Activated naive CD4-positive, alpha-beta T cell treated with anti-CD3 and anti-CD28 coated beads, Interleukin-2, amount 10 ng/mL, durations not matched to agents 7 days and 5 days (primary cell): ENCODE measurements at regions of chr2 and their contacts with region 1.

Region 1: DNA sequence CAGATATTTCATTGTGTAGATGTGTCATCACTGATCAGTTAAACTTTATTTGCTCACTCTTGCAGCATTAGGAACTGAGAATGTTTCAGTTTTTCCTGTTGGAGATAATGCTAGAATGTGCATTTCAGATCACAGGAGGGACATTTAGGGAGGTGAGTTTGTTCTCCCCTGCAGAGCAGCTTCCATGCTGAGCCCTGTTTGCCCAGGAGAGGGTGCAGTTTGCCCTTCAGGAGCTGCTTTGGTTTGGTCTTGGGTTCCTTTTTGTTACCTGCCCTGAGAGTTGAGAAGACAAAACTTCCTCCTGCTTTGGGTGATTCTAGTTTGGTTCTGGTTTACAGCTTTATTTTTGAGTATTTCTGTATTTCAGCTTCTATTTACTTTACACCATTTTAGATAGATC is 49.9 kb downstream of the DGKD start:
- DNase-seq: peak; percentile 85
- H3K4me3 Mint-ChIP-seq: no peak overlapping the region
- H3K27ac Mint-ChIP-seq: peak overlapping the region; percentile 46
- H3K4me1 Mint-ChIP-seq: peaks cover 72% of the 10 kb centered on the region
- H3K27me3 Mint-ChIP-seq: no peaks in the 10 kb centered on the region

Region 2: DNA sequence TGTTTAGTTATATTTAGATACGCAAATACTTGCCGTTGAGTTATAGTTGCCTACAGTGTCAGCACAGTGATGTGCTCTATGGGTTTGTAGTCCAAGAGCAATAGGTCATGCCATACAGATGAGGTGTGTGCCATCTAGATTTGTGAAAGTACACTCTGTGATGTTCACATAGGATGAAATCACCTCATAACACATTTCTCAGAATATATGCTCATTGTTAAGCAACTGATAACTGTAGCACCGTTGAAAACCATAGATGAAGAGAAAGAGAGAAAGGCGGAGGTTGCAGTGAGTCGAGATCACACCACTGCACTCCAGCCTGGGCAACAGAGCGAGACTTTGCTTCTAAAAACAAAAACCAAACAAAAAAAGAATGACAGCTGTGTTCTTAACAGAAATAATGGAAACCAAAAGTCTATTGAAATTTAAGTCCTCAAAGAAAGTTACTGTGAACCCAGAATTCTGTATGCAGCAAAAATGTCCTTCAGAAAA is 40.4 kb before region 1 on chr2:
- CTCF ChIA-PET with region 1: no interaction called
- DNase-seq: no peak
- H3K4me3 Mint-ChIP-seq: no peak overlapping the region
- H3K27ac Mint-ChIP-seq: no peak overlapping the region
- H3K4me1 Mint-ChIP-seq: peaks cover 37% of the 10 kb centered on the region
- H3K27me3 Mint-ChIP-seq: no peaks in the 10 kb centered on the region

Region 3: DNA sequence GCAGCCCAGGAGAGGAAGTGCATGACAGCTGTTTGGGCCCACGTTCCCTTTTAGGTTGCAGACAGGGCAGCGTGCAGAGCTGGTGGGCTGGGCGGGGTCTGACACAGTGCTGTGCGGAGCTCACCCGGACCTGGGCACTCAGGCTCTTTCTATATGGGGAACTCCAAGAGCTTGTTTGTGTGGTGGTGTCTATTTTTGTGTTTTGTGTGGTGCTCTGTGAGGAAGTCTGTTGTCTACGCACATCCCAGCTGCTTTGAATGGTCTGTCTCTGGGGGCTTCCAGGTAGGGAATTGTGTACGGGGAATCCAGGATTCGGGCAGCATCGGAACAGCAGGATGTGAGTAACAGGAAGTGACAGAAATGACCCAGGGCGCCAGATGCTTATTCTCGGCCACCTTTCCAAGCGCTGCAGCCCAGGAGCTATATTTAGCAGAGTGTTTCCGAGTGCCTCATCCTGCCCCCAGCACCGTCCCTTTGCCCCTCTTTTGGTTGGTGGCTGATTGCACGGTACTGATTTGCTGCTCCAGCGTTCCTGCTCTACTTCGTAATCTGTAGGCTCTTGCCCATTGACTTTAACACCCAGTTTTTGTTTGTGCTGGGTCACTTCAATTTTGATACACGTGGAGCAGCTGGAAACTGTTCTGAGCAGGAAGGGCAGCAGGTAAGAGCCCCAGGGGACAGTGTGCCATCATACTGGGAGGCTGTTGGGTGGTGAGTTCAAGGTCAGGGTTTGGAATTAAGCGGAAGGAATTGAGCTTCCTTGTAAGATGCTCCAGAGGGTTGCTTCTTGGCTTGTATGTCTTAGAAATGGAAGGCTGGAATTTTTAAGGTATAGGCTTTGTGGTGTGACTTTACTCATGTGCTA is 14.8 kb after region 1 on chr2:
- CTCF ChIA-PET with region 1: interaction called, 31 read pairs
- DNase-seq: peak; percentile 72
- H3K4me3 Mint-ChIP-seq: peak overlapping the region; percentile 83
- H3K27ac Mint-ChIP-seq: peak overlapping the region; percentile 98
- H3K4me1 Mint-ChIP-seq: peaks cover 99% of the 10 kb centered on the region
- H3K27me3 Mint-ChIP-seq: no peaks in the 10 kb centered on the region